ENCODE measurements at regions of chr2 and their contacts with region 1.

Region 1: GRCh38 chr2:224982910-224983711 is 59.2 kb downstream of the DOCK10 start:
- ATAC-seq: peak; percentile 30 to 89 (median 80)
- H3K4me3 ChIP-seq: no peak overlapping the region
- H3K27ac ChIP-seq: no peak overlapping the region
- H3K4me1 ChIP-seq: peaks cover 22 to 25% of the 10 kb centered on the region in 2 donors

Region 2: DNA sequence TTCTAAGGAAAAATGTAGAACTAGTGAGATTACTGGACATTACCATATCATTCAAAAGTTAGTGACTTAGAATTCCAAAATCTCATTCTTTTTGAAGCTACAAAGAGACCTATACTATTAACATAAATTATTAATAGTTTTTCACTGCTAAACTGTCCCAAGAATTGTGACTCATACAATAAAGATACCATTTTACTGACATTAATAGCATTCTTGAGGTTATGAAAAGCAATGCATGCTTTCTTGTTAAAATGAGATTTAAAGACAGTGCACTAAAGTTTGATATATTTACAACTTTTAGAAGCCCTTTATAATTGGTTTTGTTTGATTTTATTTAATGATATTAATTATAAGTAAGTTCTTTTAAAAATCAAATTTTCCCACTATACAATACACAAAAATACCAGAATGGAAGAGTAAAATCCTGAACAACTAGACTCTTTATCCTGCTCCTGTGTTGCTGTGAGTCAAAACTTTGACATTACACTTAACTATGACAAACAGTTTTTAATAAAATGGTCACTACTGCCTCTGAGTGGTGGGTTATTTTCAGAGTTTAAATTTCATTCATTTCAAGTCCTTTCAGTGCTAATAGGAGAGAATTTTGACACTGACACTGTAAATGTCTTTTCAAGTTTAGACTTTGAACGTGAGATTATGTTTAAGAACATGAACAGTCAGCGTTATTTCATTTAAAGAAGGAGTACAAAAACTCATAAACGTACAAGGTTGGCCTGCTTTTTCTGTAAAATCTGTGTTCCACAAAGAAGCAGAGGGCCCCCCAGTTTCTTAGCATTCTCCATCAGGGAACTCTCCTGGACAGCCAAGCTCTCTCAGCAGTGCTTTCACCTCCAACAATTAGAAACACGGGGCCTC is 635.7 kb before region 1 on chr2:
- in situ Hi-C with region 1: loop called in 1 of 9 experiments (anchors 25 kb)
- ATAC-seq: peak in 3 of 8 experiments; percentile 22 to 63 (median 59)
- H3K4me3 ChIP-seq: no peak overlapping the region
- H3K27ac ChIP-seq: no peak overlapping the region
- H3K4me1 ChIP-seq: no peaks in the 10 kb centered on the region

Measured in motor neuron (in vitro differentiated cells).